ENCODE measurements at regions of chr2 and their contacts with region 1.

Region 1: GRCh38 chr2:150472511-150472899 is 15.0 kb downstream of the RND3 start:
- DNase-seq: peak; percentile 34 to 69
- H3K4me3 ChIP-seq: no peak overlapping the region
- H3K4me3 Mint-ChIP-seq: no peak overlapping the region
- H3K27ac Mint-ChIP-seq: peak overlapping the region; percentile 45
- H3K4me1 ChIP-seq: peaks cover 82% of the 10 kb centered on the region
- H3K4me1 Mint-ChIP-seq: peaks cover 67% of the 10 kb centered on the region
- H3K27me3 ChIP-seq: no peaks in the 10 kb centered on the region
- H3K27me3 Mint-ChIP-seq: no peaks in the 10 kb centered on the region
- CTCF ChIP-seq: no peak

Region 2: GRCh38 chr2:149296031-149296430 is 1176.5 kb before region 1 on chr2:
- CTCF ChIA-PET with region 1: no interaction called
- POLR2A ChIA-PET with region 1: no interaction called
- intact Hi-C with region 1: no loop called
- DNase-seq: no peak
- H3K4me3 ChIP-seq: no peak overlapping the region
- H3K4me3 Mint-ChIP-seq: no peak overlapping the region
- H3K27ac Mint-ChIP-seq: no peak overlapping the region
- H3K4me1 ChIP-seq: peaks cover 18% of the 10 kb centered on the region; the same call in 1 of the 2 replicates
- H3K4me1 Mint-ChIP-seq: peaks cover 1% of the 10 kb centered on the region
- H3K27me3 ChIP-seq: no peaks in the 10 kb centered on the region
- H3K27me3 Mint-ChIP-seq: no peaks in the 10 kb centered on the region
- CTCF ChIP-seq: no peak

Region 3: GRCh38 chr2:149924028-149924427 is 548.5 kb before region 1 on chr2:
- CTCF ChIA-PET with region 1: no interaction called
- POLR2A ChIA-PET with region 1: no interaction called
- intact Hi-C with region 1: loop called (anchors 10 kb)
- DNase-seq: no peak
- H3K4me3 ChIP-seq: no peak overlapping the region
- H3K4me3 Mint-ChIP-seq: no peak overlapping the region
- H3K27ac Mint-ChIP-seq: no peak overlapping the region
- H3K4me1 ChIP-seq: no peaks in the 10 kb centered on the region
- H3K4me1 Mint-ChIP-seq: peaks cover 12% of the 10 kb centered on the region
- H3K27me3 ChIP-seq: no peaks in the 10 kb centered on the region
- H3K27me3 Mint-ChIP-seq: no peaks in the 10 kb centered on the region
- CTCF ChIP-seq: no peak

Measured in Caco-2 (cell line).